PC-3 (cell line): ENCODE measurements at regions of chr22 and their contacts with region 1.

Region 1: DNA sequence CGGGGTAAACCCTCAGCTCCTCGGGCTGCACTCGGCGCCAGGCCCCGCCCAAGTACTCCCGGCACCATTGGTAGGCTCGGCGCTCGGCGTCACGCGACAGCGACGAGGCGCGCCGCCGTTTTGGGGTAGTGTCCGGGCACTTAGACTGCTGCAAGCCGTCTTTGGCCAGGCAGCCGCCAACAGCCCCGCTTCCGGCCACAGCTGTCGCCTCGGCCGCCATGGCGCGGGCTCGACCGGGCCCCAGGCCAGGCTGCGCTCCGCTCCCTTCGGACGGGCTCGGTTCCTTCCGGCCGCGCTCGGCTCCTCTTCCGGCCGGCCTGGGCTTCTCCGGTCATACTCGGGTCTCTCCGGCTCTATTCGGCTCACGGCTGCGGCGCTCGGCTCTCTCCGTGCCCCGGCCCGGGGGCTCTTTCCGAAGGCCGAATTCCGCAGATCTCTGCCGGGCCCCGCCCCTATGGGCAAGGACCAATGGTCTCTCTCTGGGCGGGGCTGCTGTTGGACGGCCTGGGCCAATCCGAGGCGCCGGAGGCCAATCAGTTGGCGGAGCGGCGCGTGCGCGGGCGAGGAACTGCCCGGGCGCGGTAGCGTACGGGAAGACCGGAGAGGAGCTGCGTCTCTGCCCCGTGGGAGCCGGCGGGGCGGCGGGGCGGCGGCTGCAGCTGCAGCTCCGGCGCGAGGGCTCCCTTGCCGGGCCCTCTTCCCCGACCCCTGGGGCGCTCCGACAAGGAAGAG is at the start of gene CHKB:
- DNase-seq: peak; percentile 96
- ATAC-seq: peak; percentile 95
- H3K4me3 ChIP-seq: peak within 1 kb of the TSS; percentile 77
- H3K27ac ChIP-seq: peak within 1 kb of the TSS; percentile 66
- H3K4me1 ChIP-seq: peaks cover 5% of the 10 kb centered on the region
- H3K27me3 ChIP-seq: no peaks in the 10 kb centered on the region
- CTCF ChIP-seq: no peak
- total RNA-seq, gene CHKB: 27.0 and 31.5 TPM in 2 replicates

Region 2: GRCh38 chr22:50531962-50532674 is 50.6 kb before region 1 on chr22:
- CTCF ChIA-PET with region 1: no interaction called
- POLR2A ChIA-PET with region 1: no interaction called
- intact Hi-C with region 1: loop called (anchors 2 kb)
- DNase-seq: peak; percentile 43
- ATAC-seq: peak; percentile 43
- H3K4me3 ChIP-seq: peak overlapping the region; percentile 78
- H3K27ac ChIP-seq: peak overlapping the region; percentile 20; the same call in 1 of the 2 replicates
- H3K4me1 ChIP-seq: peaks cover 10% of the 10 kb centered on the region; the same call in 1 of the 2 replicates
- H3K27me3 ChIP-seq: no peaks in the 10 kb centered on the region
- CTCF ChIP-seq: no peak

Region 3: DNA sequence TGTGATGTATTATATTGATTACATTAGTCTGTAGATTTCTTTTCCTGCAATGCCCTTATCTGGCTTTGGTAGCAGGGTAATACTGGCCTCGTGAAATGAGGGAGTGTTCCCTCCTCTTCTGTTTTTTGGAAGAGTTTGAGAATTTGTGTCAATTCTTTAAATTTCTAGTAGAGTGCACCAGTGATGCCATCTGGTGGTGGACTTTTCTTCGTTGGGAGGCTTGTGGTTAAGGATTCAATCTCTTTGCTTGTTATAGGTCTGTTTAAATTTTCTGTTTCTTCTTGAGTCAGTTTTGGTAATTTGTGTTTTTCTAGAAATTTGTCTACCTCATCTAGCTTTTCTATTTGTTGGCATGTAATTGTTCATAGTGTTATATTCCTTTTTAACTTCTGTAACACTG is 108.8 kb after region 1 on chr22:
- CTCF ChIA-PET with region 1: no interaction called
- POLR2A ChIA-PET with region 1: no interaction called
- intact Hi-C with region 1: loop called (anchors 5 kb)
- DNase-seq: peak; percentile 62
- ATAC-seq: 0 out of 2 replicates have a peak, but pooled peaks have one; percentile 31
- H3K4me3 ChIP-seq: no peak overlapping the region
- H3K27ac ChIP-seq: no peak overlapping the region
- H3K4me1 ChIP-seq: no peaks in the 10 kb centered on the region
- H3K27me3 ChIP-seq: no peaks in the 10 kb centered on the region
- CTCF ChIP-seq: peak; percentile 80